Calu3 (cell line): ENCODE measurements at regions of chr12 and their contacts with region 1.

Region 1: GRCh38 chr12:71164568-71165197 is 6.9 kb upstream of the TSPAN8 start:
- DNase-seq: peak; percentile 55
- H3K4me3 Mint-ChIP-seq: peak overlapping the region; percentile 62
- H3K27ac Mint-ChIP-seq: peak overlapping the region; percentile 88
- H3K4me1 Mint-ChIP-seq: peaks cover 80% of the 10 kb centered on the region
- H3K27me3 Mint-ChIP-seq: no peaks in the 10 kb centered on the region
- CTCF ChIP-seq: no peak

Region 2: DNA sequence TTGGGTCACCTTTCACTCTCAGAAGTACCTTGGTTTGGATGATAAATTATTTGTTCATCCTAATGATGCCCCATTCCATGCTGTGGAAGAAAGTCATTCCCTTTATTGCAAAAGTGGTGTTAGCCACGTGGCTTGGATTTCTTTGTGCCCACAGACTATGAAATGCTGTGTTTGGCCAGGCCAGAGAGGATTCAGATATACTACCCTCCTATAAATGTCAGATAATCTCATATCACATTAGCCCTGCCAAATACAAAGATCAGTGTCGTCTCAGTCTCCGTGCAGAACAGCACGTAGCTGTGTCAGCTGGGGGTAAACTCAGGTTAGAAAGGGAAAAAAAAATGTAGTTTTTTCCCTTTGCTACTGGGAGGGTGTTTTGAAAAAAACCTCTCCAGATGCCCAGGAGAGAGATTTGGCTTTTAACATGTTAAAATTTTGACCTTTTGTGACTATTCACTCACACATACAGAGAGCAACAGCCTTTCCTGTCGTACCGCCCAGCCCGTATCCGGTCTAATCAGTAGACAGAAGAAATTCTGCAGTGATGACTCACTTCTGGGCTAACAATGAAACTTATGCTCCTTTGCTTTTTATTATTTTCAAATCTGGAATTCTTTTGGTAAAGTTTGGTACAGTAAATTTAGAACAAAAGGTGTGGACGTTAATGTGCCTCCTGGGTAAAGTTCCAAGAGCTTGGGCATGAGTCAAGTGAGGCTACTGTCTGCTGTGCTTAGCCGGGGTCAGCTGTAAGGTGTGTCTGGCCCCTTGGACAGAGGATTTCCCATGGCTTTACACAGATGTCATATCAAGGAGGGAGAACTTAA is 519.0 kb before region 1 on chr12:
- CTCF ChIA-PET with region 1: no interaction called
- intact Hi-C with region 1: loop called (anchors 5 kb)
- DNase-seq: peak; percentile 81
- H3K4me3 Mint-ChIP-seq: peak overlapping the region; percentile 39
- H3K27ac Mint-ChIP-seq: peak overlapping the region; percentile 91
- H3K4me1 Mint-ChIP-seq: peaks cover 65% of the 10 kb centered on the region
- H3K27me3 Mint-ChIP-seq: no peaks in the 10 kb centered on the region
- CTCF ChIP-seq: no peak

Region 3: DNA sequence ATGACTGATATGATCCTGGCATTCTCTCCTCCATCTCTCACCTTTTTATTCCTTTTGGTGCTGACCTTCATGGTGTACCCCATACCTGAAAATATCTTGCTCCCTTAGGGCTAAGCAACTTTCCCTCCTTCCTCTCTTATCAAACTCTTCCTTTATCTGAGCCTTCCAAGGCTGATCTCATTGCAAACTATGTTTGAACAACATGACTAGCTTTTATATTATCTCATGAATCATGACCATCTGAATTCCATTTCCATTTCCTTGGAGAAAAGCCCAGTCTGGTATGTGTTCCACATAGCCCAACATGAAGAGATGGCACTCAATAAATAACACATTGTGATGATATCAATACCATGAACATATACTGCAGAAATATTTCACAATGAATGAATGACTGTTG is 118.5 kb before region 1 on chr12:
- CTCF ChIA-PET with region 1: no interaction called
- intact Hi-C with region 1: no loop called
- DNase-seq: peak; percentile 2
- H3K4me3 Mint-ChIP-seq: peak overlapping the region; percentile 9
- H3K27ac Mint-ChIP-seq: peak overlapping the region; percentile 32
- H3K4me1 Mint-ChIP-seq: peaks cover 44% of the 10 kb centered on the region
- H3K27me3 Mint-ChIP-seq: no peaks in the 10 kb centered on the region
- CTCF ChIP-seq: no peak

Region 4: DNA sequence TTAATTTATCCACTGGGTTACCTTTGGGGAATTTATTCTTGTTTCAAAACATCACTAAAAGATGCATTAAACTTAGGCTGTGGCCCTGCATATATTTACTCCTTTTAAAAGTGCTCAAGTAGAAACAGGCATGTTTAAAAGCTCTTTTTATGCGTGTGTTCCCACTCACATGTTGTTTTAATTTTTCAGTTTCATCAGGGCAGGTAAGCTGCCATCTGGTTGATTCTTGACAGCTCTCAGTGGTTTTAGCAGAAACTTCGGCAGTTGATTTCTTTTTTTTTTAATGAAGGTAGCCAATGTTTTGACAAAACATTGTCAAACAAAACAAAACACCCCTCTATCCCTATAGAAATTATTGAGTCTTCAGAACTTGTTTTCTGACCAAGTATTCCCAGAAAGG is 185.3 kb after region 1 on chr12:
- CTCF ChIA-PET with region 1: interaction called, 10 read pairs
- intact Hi-C with region 1: no loop called
- DNase-seq: no peak
- H3K4me3 Mint-ChIP-seq: no peak overlapping the region
- H3K27ac Mint-ChIP-seq: no peak overlapping the region
- H3K4me1 Mint-ChIP-seq: no peaks in the 10 kb centered on the region
- H3K27me3 Mint-ChIP-seq: no peaks in the 10 kb centered on the region
- CTCF ChIP-seq: no peak